Right ventricle myocardium inferior (tissue), 1 donor: ENCODE measurements at regions of chr3 and their contacts with region 1.

Region 1: DNA sequence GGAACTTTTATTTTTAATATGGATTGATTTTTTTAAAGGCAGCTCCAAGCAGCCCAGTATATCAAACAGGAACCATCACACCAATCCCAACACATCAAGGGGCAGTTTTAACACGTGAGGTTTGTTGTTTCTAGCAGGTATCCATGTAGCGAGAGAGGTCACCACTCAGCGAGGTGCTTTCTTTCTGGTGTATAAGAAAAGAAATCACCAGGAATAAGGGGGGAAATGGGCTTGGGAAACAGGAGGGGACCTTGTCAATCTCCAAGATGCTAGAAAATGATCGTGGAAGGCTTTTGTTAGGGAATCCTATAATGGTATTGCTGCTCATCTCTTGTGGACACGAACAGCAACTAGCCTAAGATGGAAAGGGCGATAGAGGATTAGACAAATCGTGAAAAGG is 402.9 kb upstream of the ATP11B start:
- DNase-seq: no peak
- ATAC-seq: no peak

Region 2: DNA sequence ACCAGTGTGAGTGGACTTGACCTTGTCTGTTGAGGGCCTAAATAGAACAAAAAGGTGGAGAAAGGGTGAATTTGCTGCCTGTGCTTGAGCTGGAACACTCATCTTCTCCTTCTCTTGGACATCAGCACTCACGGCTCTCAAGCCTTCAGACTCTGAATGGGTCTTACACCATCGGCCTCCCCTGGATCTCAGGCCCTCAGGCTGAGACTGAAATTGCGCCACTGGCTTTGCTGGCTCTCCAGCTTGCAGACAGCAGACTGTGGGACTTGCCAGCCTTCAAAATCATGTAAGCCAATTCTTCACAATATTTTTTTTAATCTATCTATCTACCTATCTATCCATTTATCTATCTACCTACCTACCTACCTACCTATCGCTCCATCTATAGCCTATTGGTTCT is 31.2 kb after region 1 on chr3:
- intact Hi-C with region 1: loop called (anchors 2 kb)
- DNase-seq: no peak
- ATAC-seq: no peak